ENCODE measurements at regions of chr20 and their contacts with region 1.

Region 1: DNA sequence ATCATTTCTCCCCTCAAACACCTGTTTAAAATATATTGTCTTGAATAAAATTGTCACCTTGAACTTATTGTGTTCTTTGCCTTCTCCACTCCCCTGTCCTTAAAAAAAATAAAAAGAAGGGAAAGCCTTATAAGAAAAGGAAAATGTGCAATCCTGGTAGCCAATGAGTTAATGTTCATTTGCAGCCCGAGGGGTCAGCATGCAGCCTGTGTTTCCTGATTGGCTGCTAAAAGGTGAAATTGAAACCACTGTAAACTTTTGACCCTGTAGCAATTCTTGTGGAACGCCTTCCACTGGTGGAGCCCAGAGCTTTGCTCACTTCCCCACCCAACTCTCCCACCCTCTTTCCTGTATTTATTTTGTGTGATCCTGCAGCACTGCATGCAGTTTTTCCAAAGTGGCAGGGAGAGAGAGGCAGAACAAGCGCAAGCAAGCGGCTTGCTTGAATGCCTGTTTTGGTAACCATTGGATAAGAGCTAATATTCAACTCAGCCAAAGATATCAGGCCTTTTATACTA is 74.9 kb downstream of the NCOA3 start:
- DNase-seq: peak in 3 of 9 experiments; percentile 2 to 16 (median 13)
- ATAC-seq: no peak
- H3K4me3 ChIP-seq: no peak overlapping the region
- H3K4me3 Mint-ChIP-seq: peak overlapping the region; percentile 35
- H3K27ac ChIP-seq: no peak overlapping the region
- H3K27ac Mint-ChIP-seq: peak overlapping the region; percentile 76
- H3K4me1 ChIP-seq: peaks cover 39% of the 10 kb centered on the region
- H3K4me1 Mint-ChIP-seq: peaks cover 80% of the 10 kb centered on the region
- H3K27me3 ChIP-seq: no peaks in the 10 kb centered on the region
- H3K27me3 Mint-ChIP-seq: no peaks in the 10 kb centered on the region
- CTCF ChIP-seq: no peak

Region 2: DNA sequence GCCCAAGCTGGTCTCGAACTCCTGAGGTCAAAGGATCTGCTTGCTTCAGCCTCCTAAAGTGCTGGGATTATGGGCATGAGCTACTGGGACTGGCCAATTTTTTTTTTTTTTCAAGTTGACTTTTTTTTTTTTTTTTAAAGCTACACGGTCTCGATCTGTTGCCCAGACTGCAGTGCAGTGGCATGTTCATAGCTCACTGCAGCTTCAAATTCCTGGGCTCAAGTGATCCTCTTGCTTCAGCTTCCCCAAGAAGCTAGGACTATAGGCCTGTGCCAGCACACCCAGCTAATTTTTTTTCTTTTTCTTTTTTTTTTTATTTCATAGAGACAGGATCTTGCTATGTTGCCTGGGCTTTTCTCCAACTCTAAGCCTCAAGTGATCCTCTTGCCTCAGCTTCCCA is 15.4 kb before region 1 on chr20:
- CTCF ChIA-PET with region 1: no interaction called
- POLR2A ChIA-PET with region 1: interaction called, 3 read pairs
- intact Hi-C with region 1: loop called in 1 of 2 experiments (anchors 2 kb)
- DNase-seq: no peak
- ATAC-seq: no peak
- H3K4me3 ChIP-seq: no peak overlapping the region
- H3K4me3 Mint-ChIP-seq: no peak overlapping the region
- H3K27ac ChIP-seq: no peak overlapping the region
- H3K27ac Mint-ChIP-seq: no peak overlapping the region
- H3K4me1 ChIP-seq: peaks cover 44% of the 10 kb centered on the region
- H3K4me1 Mint-ChIP-seq: peaks cover 82% of the 10 kb centered on the region
- H3K27me3 ChIP-seq: no peaks in the 10 kb centered on the region
- H3K27me3 Mint-ChIP-seq: no peaks in the 10 kb centered on the region
- CTCF ChIP-seq: no peak